ENCODE measurements at regions of chr17 and their contacts with region 1.

Region 1: GRCh38 chr17:8732406-8733085 is 12.1 kb downstream of the CCDC42 start:
- DNase-seq: no peak
- ATAC-seq: no peak
- H3K4me3 ChIP-seq: no peak overlapping the region
- H3K27ac ChIP-seq: no peak overlapping the region
- H3K4me1 ChIP-seq: peaks cover 0 to 5% of the 10 kb centered on the region in 2 experiments; a peak in 2 of 5 replicates
- H3K27me3 ChIP-seq: peaks cover 2 to 29% of the 10 kb centered on the region in 2 experiments; a peak in 3 of 5 replicates
- CTCF ChIP-seq: no peak
- EP300 ChIP-seq: no peak
- POLR2A ChIP-seq: no peak
- RAD21 ChIP-seq: no peak

Region 2: DNA sequence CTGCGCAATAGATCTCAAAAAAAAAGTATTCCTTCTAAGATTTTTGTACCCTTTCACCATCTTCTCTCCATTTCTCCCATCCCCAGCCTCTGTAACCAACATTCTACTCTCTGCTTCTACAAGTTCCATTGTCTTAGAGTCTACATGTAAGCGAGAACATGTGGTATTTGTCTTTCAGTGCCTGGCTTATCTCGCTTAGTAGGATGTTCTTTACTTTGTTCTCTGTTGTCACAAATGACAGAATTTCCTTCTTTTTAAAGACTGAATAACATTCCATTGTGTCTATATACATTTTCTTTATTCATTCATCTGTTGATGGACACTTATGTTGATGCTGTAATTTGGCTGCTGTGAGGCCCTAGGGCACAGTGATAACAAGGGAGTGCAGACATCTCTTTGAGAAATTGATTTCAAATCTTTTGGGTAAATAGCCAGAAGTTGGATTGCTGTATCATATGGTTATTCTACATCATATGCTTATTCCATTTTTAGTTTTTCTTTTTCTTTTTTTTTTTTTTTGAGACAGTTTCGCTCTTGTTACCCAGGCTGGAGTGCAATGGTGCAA is 64.3 kb before region 1 on chr17:
- CTCF ChIA-PET with region 1: no interaction called
- POLR2A ChIA-PET with region 1: no interaction called
- in situ Hi-C with region 1: no loop called
- intact Hi-C with region 1: loop called (anchors 5 kb)
- DNase-seq: no peak
- ATAC-seq: no peak
- H3K4me3 ChIP-seq: no peak overlapping the region
- H3K27ac ChIP-seq: no peak overlapping the region
- H3K4me1 ChIP-seq: no peaks in the 10 kb centered on the region
- H3K27me3 ChIP-seq: peaks cover 7 to 10% of the 10 kb centered on the region in 2 experiments; a peak in 3 of 5 replicates
- CTCF ChIP-seq: no peak
- EP300 ChIP-seq: no peak
- POLR2A ChIP-seq: no peak
- RAD21 ChIP-seq: no peak

Region 3: GRCh38 chr17:9346296-9346926 is 613.9 kb after region 1 on chr17:
- CTCF ChIA-PET with region 1: no interaction called
- POLR2A ChIA-PET with region 1: no interaction called
- in situ Hi-C with region 1: no loop called
- intact Hi-C with region 1: no loop called
- DNase-seq: no peak
- ATAC-seq: no peak
- H3K4me3 ChIP-seq: no peak overlapping the region
- H3K27ac ChIP-seq: no peak overlapping the region
- H3K4me1 ChIP-seq: no peaks in the 10 kb centered on the region
- H3K27me3 ChIP-seq: no peaks in the 10 kb centered on the region; a peak in 1 of 5 replicates
- CTCF ChIP-seq: no peak
- EP300 ChIP-seq: no peak
- POLR2A ChIP-seq: no peak
- RAD21 ChIP-seq: no peak